Activated CD4-positive, alpha-beta T cell treated with anti-CD3 and anti-CD28 coated beads, Interleukin-2, amount 10 ng/mL, durations not matched to agents 24 days and 14 days (primary cell): ENCODE measurements at regions of chr16 and their contacts with region 1.

Region 1: DNA sequence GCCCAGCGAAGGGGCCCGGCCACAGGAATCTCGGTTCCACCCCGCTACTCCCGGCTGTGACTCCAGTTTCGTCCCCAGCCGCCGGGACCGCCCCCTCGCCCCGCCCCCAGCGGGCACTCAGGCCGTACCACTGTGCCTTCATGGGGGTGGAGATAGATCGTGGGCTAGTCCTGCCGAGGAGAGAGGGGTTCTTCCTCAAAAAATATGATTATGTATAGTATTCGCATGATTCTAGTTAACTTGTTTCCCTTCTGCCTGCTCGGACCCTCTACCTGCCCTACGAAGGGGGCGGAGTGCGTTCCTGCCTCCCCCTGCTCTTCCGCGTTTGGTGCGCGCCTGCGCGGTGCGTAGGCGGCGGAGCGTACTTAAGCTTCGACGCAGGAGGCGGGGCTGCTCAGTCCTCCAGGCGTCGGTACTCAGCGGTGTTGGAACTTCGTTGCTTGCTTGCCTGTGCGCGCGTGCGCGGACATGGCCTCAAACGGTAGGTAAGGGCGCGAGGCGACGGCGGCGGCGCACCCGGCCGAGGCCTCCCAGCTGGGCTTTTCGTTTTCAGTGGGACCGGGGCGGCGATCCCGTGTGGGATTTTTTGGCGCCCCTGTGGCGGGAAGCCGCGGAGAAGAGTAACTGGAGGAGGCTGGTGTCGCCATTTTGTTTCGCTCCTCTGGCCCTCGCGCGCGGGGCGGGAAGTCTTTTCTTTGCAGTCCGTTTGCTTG is at the start of gene FUS:
- DNase-seq: peak; percentile 97
- H3K4me3 Mint-ChIP-seq: peak within 1 kb of the TSS; percentile 100
- H3K27ac Mint-ChIP-seq: peak within 1 kb of the TSS; percentile 98
- H3K4me1 Mint-ChIP-seq: peaks cover 53% of the 10 kb centered on the region
- H3K27me3 Mint-ChIP-seq: peaks cover 2% of the 10 kb centered on the region
- total RNA-seq, gene FUS: 936 and 955 TPM in 2 replicates

Region 2: DNA sequence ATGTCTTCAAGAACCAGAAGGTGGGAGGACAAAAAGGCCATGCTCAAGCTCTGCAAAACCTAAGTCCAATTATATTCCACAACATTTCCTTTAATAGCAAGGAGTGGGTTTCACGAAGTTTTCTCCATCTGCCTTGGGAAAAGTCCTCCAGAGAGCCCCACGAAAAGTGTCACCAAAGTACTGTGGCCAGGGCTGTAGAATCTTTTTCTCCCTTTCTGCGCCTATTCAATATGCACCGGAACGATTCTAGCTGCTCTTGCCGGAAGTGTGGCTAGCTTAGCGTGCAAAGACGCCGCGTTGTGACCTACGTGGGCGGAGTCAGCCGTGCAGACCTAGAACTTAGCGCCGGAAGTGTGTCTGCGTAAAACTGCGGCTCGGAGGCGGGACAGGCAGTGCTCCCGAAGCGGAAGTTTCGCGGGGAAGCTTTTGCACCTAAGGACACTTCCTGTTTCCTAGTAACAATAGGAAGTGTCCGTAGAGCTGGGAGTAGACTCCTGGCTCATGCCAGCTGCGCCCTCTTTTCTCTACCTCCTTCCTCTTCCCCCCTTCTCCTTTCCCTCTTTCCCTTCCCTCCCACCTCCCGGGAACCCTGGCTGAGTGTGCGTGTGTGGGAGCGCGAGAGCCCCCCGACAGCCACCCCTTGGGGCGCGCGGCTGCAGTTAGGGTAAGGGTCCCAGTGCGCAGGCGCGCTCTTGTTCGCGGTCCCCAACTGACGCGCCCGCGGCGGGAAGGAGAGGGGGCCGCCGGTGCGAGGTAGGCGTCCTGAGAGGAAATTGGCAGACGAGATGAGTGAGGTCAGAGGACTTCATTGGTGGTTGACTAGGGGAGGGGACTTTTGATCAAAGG is 105.7 kb before region 1 on chr16 and contains the starts of genes ZNF646 and ZNF668:
- intact Hi-C with region 1: loop called (anchors 1 kb)
- DNase-seq: peak; percentile 99
- H3K4me3 Mint-ChIP-seq: peak within 1 kb of the TSS; percentile 90
- H3K27ac Mint-ChIP-seq: peak within 1 kb of the TSS; percentile 93
- H3K4me1 Mint-ChIP-seq: peaks cover 31% of the 10 kb centered on the region
- H3K27me3 Mint-ChIP-seq: no peaks in the 10 kb centered on the region
- total RNA-seq, gene ZNF646: 21.1 and 23.3 TPM in 2 replicates
- total RNA-seq, gene ZNF668: 15.6 and 15.9 TPM in 2 replicates

Region 3: GRCh38 chr16:31142109-31143010 is 37.5 kb before region 1 on chr16:
- intact Hi-C with region 1: loop called (anchors 1 kb)
- DNase-seq: peak; percentile 99
- H3K4me3 Mint-ChIP-seq: peak overlapping the region; percentile 69
- H3K27ac Mint-ChIP-seq: peak overlapping the region; percentile 82
- H3K4me1 Mint-ChIP-seq: peaks cover 8% of the 10 kb centered on the region
- H3K27me3 Mint-ChIP-seq: no peaks in the 10 kb centered on the region

Region 4: DNA sequence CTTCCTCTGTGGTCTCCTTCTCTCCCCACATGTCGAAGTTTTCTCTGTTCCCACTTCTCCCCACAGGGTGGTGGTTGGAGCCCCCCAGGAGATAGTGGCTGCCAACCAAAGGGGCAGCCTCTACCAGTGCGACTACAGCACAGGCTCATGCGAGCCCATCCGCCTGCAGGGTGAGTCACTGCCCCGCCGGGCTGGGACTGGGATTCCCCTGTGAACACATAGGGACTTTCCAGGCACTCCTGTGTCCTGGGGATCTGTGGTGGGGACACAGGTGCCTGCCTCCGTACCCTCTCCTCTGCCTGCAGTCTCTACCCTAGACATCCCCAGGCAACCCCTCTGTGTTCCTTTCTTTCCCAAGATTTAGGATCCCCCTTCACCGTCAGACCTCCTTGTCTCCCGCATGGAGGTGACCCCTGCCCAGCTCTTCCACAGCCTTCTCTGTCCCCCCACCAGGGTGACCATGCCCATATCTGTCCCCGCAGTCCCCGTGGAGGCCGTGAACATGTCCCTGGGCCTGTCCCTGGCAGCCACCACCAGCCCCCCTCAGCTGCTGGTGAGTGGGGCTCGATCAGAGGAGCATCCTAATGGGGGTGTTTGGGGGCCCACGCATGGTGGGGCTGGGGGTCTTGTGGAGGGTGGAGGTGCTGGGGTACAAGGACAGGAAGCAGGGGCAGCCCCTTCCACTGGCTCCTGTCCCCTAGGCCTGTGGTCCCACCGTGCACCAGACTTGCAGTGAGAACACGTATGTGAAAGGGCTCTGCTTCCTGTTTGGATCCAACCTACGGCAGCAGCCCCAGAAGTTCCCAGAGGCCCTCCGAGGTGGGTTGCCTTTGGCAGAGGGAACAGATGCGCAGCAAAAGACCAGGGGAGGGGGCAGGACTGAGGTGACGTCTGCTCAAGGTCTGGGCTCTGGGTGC is 85.7 kb after region 1 on chr16:
- intact Hi-C with region 1: loop called (anchors 2 kb)
- DNase-seq: peak; percentile 91
- H3K4me3 Mint-ChIP-seq: peak overlapping the region; percentile 83
- H3K27ac Mint-ChIP-seq: peak overlapping the region; percentile 94
- H3K4me1 Mint-ChIP-seq: peaks cover 60% of the 10 kb centered on the region
- H3K27me3 Mint-ChIP-seq: no peaks in the 10 kb centered on the region

Region 5: DNA sequence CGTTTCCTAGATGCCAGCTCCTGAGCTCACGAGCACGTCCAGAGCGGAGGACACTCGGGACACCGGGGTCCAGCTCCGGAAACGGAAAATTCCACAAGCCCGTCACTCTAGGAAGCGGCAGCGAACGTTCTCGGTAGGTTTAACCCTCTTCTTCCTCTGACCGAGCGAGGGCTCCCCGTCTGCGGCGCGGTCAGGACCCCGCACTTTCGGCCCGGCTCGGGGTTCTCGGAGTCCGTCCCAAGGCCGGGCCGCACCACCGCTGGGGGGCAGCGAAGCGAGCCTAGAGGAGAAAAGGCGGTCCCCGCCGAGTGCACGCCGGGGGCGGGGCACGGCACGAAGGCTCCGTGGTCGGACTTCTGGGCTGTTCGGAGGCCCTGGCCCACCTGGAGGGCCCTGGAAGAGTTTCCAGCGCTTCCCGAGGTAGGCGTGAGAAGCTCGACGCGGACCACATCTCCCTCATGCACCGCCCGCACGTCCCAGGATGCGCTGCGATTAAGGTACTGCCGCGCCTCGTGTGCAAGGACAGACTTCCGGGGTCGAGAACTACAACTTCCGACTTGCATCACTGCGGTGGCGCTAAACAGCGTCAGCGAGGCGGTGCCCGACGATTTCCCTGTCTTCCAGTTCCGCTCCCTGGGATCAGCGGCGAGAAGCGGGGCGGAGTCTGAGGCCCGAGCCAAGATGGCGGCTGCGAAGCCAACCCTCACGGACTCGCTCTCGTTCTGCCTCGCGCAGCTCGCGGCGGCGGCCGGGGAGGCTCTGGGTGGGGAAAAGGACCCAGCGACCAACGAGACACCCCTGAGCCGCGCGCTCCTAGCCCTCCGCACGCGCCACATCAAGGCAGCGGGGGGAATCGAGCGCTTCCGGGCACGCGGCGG is 279.2 kb after region 1 on chr16 and contains the start of gene ARMC5:
- intact Hi-C with region 1: loop called (anchors 1 kb)
- DNase-seq: peak; percentile 99
- H3K4me3 Mint-ChIP-seq: peak within 1 kb of the TSS; percentile 95
- H3K27ac Mint-ChIP-seq: peak within 1 kb of the TSS; percentile 98
- H3K4me1 Mint-ChIP-seq: peaks cover 30% of the 10 kb centered on the region
- H3K27me3 Mint-ChIP-seq: no peaks in the 10 kb centered on the region
- total RNA-seq, gene ARMC5: 9.9 and 10.5 TPM in 2 replicates